ENCODE measurements at regions of chr2 and their contacts with region 1.

Region 1: GRCh38 chr2:207625018-207625907 is at the start of gene METTL21A:
- DNase-seq: no peak
- H3K4me3 ChIP-seq: peak within 1 kb of the TSS; percentile 91
- H3K27ac ChIP-seq: peak within 1 kb of the TSS; percentile 96
- H3K27me3 ChIP-seq: no peaks in the 10 kb centered on the region
- CTCF ChIP-seq: peak; percentile 52
- polyA plus RNA-seq, gene METTL21A: 18.1 and 20.3 TPM in 2 replicates

Region 2: DNA sequence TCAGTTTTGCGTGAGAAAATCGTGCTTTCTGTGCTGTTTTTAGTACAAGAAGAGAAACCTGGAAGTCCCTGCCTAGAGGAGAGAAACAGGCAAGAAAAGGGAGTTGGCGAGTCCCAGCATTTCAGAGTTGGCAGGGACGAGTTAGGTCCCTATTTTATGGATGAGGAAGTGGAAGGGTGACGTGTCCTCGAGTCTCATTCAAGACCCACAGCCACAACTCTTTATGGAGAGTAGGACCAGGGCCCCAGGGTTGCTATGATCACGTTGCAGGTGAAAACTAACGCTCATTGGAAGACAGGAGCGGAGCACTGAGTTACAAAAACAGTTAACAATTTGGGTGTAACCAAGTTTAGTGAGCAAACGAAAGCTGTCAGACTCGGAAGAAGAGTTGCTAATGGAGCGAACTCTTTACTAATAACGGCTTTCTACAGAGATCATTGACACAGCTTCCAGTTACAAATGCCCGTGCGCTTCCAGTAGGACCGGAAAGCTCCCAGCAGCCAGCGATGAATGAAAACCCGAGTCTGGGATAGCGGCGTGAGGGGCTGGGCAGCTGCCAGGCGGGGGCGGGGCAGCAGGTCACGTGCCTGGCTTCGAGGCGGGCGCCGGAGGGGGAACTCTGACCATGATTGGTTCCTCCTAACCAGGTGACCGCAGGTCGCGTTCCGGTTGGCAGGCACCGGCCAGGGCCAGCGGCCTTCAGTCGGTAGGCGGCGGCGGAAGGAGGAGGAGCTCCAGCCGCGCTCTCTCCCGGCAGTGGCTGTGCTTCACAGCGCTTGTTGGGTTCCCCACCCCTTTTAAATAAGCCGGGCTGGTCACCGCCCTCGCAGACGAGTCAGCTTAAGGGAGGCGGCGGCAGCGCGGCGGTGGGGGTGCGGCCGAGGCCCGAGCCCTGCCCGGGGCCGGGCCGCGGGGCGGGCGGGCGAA is 85.8 kb after region 1 on chr2 and contains the start of gene CCNYL1:
- CTCF ChIA-PET with region 1: interaction called, 5 read pairs
- POLR2A ChIA-PET with region 1: interaction called, 25 read pairs
- DNase-seq: peak; percentile 98
- H3K4me3 ChIP-seq: peak within 1 kb of the TSS; percentile 89
- H3K27ac ChIP-seq: peak within 1 kb of the TSS; percentile 73
- H3K27me3 ChIP-seq: no peaks in the 10 kb centered on the region
- CTCF ChIP-seq: peak; percentile 18; the same call in 1 of the 2 replicates
- polyA plus RNA-seq, gene CCNYL1: 15.7 and 20.5 TPM in 2 replicates

Region 3: DNA sequence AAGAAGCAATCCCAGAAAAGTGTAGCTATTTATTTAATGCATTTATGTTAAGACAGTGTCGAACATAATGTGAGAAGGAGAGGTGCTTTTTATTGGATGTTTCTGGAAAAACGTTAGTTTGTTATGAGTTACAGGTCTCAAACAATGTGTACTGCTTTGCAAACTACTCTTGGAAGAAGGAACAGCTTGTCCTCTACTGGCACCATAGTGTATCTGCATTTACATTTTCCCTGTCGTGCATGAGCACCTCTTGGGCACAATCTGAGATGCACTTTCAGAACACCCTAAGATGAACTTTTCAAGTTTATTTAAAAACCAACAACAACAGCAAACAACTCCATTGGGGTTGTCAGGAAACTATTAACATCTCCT is 109.0 kb after region 1 on chr2:
- CTCF ChIA-PET with region 1: interaction called, 10 read pairs
- POLR2A ChIA-PET with region 1: no interaction called
- DNase-seq: no peak
- H3K4me3 ChIP-seq: no peak overlapping the region
- H3K27ac ChIP-seq: no peak overlapping the region
- H3K27me3 ChIP-seq: no peaks in the 10 kb centered on the region
- CTCF ChIP-seq: peak; percentile 70

Region 4: GRCh38 chr2:207796585-207797350 is 171.5 kb after region 1 on chr2:
- CTCF ChIA-PET with region 1: no interaction called
- POLR2A ChIA-PET with region 1: no interaction called
- DNase-seq: no peak
- H3K4me3 ChIP-seq: no peak overlapping the region
- H3K27ac ChIP-seq: no peak overlapping the region
- H3K27me3 ChIP-seq: no peaks in the 10 kb centered on the region
- CTCF ChIP-seq: no peak